MCF 10A (cell line): ENCODE measurements at regions of chr20 and their contacts with region 1.

Region 1: GRCh38 chr20:35954200-35954906 is at the start of gene SCAND1:
- DNase-seq: peak; percentile 97
- H3K4me3 Mint-ChIP-seq: peak within 1 kb of the TSS; percentile 97
- H3K27ac Mint-ChIP-seq: peak within 1 kb of the TSS; percentile 96
- H3K4me1 Mint-ChIP-seq: peaks cover 13% of the 10 kb centered on the region
- H3K27me3 Mint-ChIP-seq: no peaks in the 10 kb centered on the region
- CTCF ChIP-seq: peak; percentile 97
- total RNA-seq, gene SCAND1: 54.6 and 63.4 TPM in 2 replicates

Region 2: DNA sequence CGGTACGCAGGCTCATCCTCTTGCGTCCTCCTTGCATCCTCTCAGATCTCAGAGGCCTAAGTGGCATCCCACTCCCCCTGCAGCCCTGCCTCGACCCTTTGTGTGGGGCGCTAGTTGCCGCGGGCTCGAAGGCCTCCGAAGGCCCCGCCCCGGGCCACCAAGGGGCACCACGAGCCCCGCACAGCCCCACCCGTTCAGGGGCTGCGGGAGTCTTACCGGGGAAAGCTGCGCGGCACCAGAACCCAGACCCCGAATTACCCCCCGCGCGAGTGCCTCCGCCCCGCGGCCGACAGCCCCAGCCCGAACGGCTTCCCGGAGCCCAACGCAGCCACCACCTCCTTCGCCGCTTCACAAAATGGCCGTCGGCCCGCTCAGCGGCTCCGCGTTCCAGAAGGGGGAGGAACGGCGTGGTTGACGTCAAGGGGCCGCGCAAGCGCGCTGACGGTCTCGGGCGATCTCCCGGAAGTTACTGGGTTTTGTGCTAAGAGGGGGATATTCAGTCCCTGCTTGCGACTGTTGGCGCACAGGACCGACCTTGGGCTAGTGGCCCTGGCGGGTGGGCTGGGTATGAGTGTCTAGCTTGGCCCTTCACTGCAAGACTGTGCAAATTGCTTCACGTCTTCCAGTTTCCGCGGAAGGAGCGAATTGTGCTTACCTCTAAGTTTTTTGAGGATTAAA is 289.7 kb before region 1 on chr20 and contains the starts of genes CPNE1 and RBM12:
- CTCF ChIA-PET with region 1: interaction called, 7 read pairs
- POLR2A ChIA-PET with region 1: interaction called, 46 read pairs
- intact Hi-C with region 1: no loop called
- DNase-seq: peak; percentile 90
- H3K4me3 Mint-ChIP-seq: peak within 1 kb of the TSS; percentile 94
- H3K27ac Mint-ChIP-seq: peak within 1 kb of the TSS; percentile 98
- H3K4me1 Mint-ChIP-seq: peaks cover 19% of the 10 kb centered on the region
- H3K27me3 Mint-ChIP-seq: no peaks in the 10 kb centered on the region
- CTCF ChIP-seq: no peak
- total RNA-seq, gene CPNE1: 161 and 194 TPM in 2 replicates
- total RNA-seq, gene RBM12: 60.1 and 64.3 TPM in 2 replicates

Region 3: GRCh38 chr20:35871311-35871771 is 83.0 kb before region 1 on chr20:
- CTCF ChIA-PET with region 1: interaction called, 9 read pairs
- POLR2A ChIA-PET with region 1: interaction called, 40 read pairs
- intact Hi-C with region 1: no loop called
- DNase-seq: peak; percentile 76
- H3K4me3 Mint-ChIP-seq: peak overlapping the region; percentile 67
- H3K27ac Mint-ChIP-seq: peak overlapping the region; percentile 95
- H3K4me1 Mint-ChIP-seq: peaks cover 40% of the 10 kb centered on the region
- H3K27me3 Mint-ChIP-seq: no peaks in the 10 kb centered on the region
- CTCF ChIP-seq: no peak

Region 4: GRCh38 chr20:35972462-35972861 is 18.1 kb after region 1 on chr20:
- CTCF ChIA-PET with region 1: interaction called, 23 read pairs
- POLR2A ChIA-PET with region 1: interaction called, 26 read pairs
- intact Hi-C with region 1: no loop called
- DNase-seq: no peak
- H3K4me3 Mint-ChIP-seq: no peak overlapping the region
- H3K27ac Mint-ChIP-seq: no peak overlapping the region
- H3K4me1 Mint-ChIP-seq: no peaks in the 10 kb centered on the region
- H3K27me3 Mint-ChIP-seq: no peaks in the 10 kb centered on the region
- CTCF ChIP-seq: no peak

Region 5: DNA sequence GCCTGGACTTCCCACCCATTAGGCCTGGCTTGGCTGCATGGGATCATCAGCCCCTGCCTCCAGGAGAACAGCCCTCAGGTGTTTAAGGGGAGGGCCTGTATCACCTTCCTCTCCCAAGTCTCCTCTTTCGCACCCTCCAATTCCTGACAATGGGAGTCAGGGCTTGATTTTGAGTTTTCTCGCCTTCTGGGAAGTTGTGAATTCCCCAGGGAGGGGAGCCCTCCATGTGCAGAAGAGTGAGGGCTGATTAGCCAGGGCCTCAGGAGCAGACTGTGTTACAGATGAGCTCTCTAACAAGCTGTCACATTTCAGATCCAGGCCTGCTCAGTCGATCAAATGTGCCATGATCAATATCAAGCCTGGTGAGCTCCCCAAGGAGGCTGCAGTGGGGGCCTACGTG is 56.5 kb after region 1 on chr20:
- CTCF ChIA-PET with region 1: no interaction called
- POLR2A ChIA-PET with region 1: no interaction called
- intact Hi-C with region 1: no loop called
- DNase-seq: no peak
- H3K4me3 Mint-ChIP-seq: no peak overlapping the region
- H3K27ac Mint-ChIP-seq: no peak overlapping the region
- H3K4me1 Mint-ChIP-seq: no peaks in the 10 kb centered on the region
- H3K27me3 Mint-ChIP-seq: no peaks in the 10 kb centered on the region
- CTCF ChIP-seq: no peak

Region 6: GRCh38 chr20:36050436-36051317 is 96.3 kb after region 1 on chr20:
- CTCF ChIA-PET with region 1: interaction called, 5 read pairs
- POLR2A ChIA-PET with region 1: interaction called, 22 read pairs
- intact Hi-C with region 1: no loop called
- DNase-seq: peak; percentile 82
- H3K4me3 Mint-ChIP-seq: peak overlapping the region; percentile 84
- H3K27ac Mint-ChIP-seq: peak overlapping the region; percentile 93
- H3K4me1 Mint-ChIP-seq: peaks cover 24% of the 10 kb centered on the region
- H3K27me3 Mint-ChIP-seq: no peaks in the 10 kb centered on the region
- CTCF ChIP-seq: no peak

Region 7: GRCh38 chr20:36145877-36146707 is 191.7 kb after region 1 on chr20:
- CTCF ChIA-PET with region 1: interaction called, 36 read pairs
- POLR2A ChIA-PET with region 1: interaction called, 11 read pairs
- intact Hi-C with region 1: no loop called
- DNase-seq: no peak
- H3K4me3 Mint-ChIP-seq: no peak overlapping the region
- H3K27ac Mint-ChIP-seq: no peak overlapping the region
- H3K4me1 Mint-ChIP-seq: peaks cover 5% of the 10 kb centered on the region
- H3K27me3 Mint-ChIP-seq: peaks cover 11% of the 10 kb centered on the region
- CTCF ChIP-seq: no peak